Stomach (tissue), 19 donors: ENCODE measurements at regions of chr9 and their contacts with region 1.

Region 1: GRCh38 chr9:110443146-110443865 is 105.6 kb upstream of the TXNDC8 start:
- DNase-seq: peak in 1 of 2 donors; percentile 17
- H3K4me3 ChIP-seq: no peak overlapping the region
- H3K27ac ChIP-seq: no peak overlapping the region
- H3K4me1 ChIP-seq: no peaks in the 10 kb centered on the region
- H3K27me3 ChIP-seq: no peaks in the 10 kb centered on the region
- CTCF ChIP-seq: no peak
- EP300 ChIP-seq: no peak
- POLR2A ChIP-seq: no peak

Region 2: DNA sequence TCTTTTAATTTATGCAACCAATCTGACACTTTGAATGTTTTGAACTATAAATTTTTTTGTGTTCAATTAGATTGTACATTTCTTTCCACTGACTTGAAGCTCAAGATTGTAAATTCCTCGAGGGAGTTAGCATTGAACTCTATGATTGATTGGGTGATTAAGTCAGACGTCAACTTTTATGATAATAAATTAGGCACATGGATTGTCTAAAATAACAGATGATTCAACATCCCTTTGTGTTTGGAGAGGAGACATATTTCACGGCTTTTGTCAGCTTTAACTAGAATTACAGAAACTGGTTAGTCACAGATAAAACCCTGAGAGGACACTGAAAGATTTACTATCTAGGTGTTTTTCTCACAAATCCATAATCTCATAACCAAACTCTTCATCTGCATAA is 73.0 kb before region 1 on chr9:
- intact Hi-C with region 1: no loop called
- DNase-seq: no peak
- H3K4me3 ChIP-seq: no peak overlapping the region
- H3K27ac ChIP-seq: no peak overlapping the region
- H3K4me1 ChIP-seq: no peaks in the 10 kb centered on the region
- H3K27me3 ChIP-seq: no peaks in the 10 kb centered on the region
- CTCF ChIP-seq: no peak
- EP300 ChIP-seq: no peak
- POLR2A ChIP-seq: no peak

Region 3: GRCh38 chr9:110623462-110624025 is 180.2 kb after region 1 on chr9:
- intact Hi-C with region 1: loop called (anchors 10 kb)
- DNase-seq: peak; percentile 35 to 83
- H3K4me3 ChIP-seq: no peak overlapping the region
- H3K27ac ChIP-seq: no peak overlapping the region
- H3K4me1 ChIP-seq: peaks cover 0 to 3% (median 0%) of the 10 kb centered on the region in 4 donors
- H3K27me3 ChIP-seq: no peaks in the 10 kb centered on the region
- CTCF ChIP-seq: peak in 5 of 7 experiments; percentile 44 to 75 (median 52)
- EP300 ChIP-seq: no peak
- POLR2A ChIP-seq: no peak